Aorta (tissue), 5 donors: ENCODE measurements at regions of chr12 and their contacts with region 1.

Region 1: DNA sequence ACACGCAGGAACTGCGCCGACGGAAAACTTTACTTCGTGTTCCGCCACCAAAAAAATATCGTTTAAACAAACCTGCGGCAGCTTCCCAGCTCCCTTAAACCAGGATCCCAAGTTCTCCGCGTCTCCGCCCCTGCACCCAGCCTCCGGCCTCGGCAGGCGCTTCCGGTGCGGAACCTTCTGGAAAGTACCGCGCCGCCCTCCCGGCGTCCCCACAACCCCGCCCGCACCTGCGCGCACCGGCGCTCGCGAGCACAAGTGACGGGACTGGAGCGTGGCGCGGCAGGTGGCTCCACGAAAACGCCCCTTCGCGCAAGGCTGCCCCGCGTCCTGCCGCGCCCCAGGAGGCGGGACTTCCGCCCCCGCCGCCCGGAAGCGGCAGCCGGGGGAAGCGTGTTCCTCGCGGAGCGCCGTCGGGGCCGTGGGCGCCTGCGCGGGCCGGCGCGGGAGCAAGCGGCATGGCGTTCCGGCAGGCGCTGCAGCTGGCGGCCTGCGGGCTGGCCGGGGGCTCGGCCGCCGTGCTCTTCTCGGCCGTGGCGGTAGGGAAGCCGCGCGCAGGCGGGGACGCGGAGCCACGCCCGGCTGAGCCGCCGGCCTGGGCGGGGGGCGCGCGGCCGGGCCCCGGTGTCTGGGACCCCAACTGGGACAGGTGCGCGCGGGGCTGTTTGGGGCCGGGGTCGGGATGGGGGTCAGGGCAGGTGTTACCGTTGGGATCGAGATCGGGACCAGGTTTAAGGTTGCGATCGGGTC is at the start of gene PGAM5:
- DNase-seq: peak; percentile 86 to 91
- ATAC-seq: peak; percentile 95
- H3K4me3 ChIP-seq: peak within 1 kb of the TSS; percentile 88 to 92
- H3K27ac ChIP-seq: peak within 1 kb of the TSS in 1 of 2 donors; percentile 9
- H3K4me1 ChIP-seq: no peaks in the 10 kb centered on the region
- H3K27me3 ChIP-seq: no peaks in the 10 kb centered on the region
- total RNA-seq, gene PGAM5: 12.9 to 17.3 TPM

Region 2: GRCh38 chr12:132672017-132672515 is 38.5 kb before region 1 on chr12:
- intact Hi-C with region 1: no loop called
- DNase-seq: no peak
- ATAC-seq: no peak
- H3K4me3 ChIP-seq: no peak overlapping the region
- H3K27ac ChIP-seq: no peak overlapping the region
- H3K4me1 ChIP-seq: no peaks in the 10 kb centered on the region
- H3K27me3 ChIP-seq: no peaks in the 10 kb centered on the region

Region 3: DNA sequence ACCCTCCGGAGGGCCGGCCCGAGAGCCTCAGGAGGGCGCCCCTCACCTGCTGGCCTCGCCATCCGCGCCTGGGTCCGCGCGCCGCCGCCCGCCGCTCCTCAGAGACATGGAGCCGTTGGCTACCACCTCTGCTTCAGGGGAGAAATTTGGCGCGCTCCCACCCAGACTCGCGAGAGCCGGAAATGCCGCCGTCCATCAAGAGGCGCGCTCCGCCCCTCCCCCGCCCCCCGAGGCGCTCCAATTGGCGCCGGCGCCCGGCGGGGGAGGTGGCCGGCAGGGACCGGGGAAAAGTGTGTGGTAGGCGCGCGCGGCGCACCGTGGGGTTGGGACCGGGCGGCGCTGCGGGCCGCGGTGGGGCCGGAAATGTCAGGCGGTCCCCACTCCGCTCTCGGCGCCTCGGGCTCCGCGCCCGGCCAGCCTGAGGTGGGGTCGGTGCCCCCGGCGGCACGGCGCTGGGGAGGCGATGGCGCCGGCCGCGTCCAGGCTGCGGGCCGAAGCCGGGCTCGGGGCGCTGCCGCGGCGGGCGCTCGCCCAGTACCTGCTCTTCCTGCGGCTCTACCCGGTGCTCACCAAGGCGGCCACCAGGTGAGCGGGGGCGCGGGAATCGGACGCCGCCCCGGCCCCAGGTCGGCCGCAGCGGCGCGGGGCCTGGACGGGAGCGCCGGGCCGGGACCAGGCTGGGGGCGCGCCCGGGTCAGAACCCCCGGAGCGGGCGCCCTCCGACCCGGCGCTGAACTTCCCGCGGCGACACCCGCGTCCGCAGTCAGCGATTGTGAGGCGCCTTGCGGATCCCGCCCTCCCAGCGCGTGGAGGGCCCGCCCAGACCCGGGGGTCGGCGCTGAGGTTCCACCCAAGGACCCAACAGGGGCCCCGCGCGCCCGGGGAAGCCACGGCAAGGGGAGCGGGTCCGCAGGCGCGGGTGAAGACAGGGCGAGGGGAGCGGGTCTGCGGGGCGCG is 23.1 kb before region 1 on chr12 and contains the starts of genes POLE and PXMP2:
- intact Hi-C with region 1: loop called in 1 of 2 experiments (anchors 2 kb)
- DNase-seq: peak; percentile 97 to 98
- ATAC-seq: peak; percentile 100
- H3K4me3 ChIP-seq: peak within 1 kb of the TSS; percentile 98
- H3K27ac ChIP-seq: peak within 1 kb of the TSS in 1 of 2 donors; percentile 24
- H3K4me1 ChIP-seq: no peaks in the 10 kb centered on the region
- H3K27me3 ChIP-seq: no peaks in the 10 kb centered on the region
- total RNA-seq, gene POLE: 33.0 to 46.8 TPM
- total RNA-seq, gene PXMP2: 13.0 to 16.3 TPM

Region 4: GRCh38 chr12:132761032-132761920 is 50.7 kb after region 1 on chr12 and contains the start of gene ANKLE2:
- intact Hi-C with region 1: loop called in 1 of 2 experiments (anchors 2 kb)
- DNase-seq: peak; percentile 67 to 86
- ATAC-seq: peak; percentile 54
- H3K4me3 ChIP-seq: peak within 1 kb of the TSS; percentile 98
- H3K27ac ChIP-seq: peak within 1 kb of the TSS; percentile 94 to 96
- H3K4me1 ChIP-seq: peaks cover 0 to 2% of the 10 kb centered on the region in 2 donors
- H3K27me3 ChIP-seq: no peaks in the 10 kb centered on the region
- total RNA-seq, gene ANKLE2: 52.0 to 65.1 TPM